ENCODE measurements at regions of chr19 and their contacts with region 1.

Region 1: GRCh38 chr19:13093407-13094105 is 9.1 kb downstream of the LYL1 start:
- DNase-seq: no peak
- ATAC-seq: peak; percentile 83
- H3K4me3 ChIP-seq: no peak overlapping the region
- H3K27ac ChIP-seq: peak overlapping the region; percentile 66
- H3K4me1 ChIP-seq: peaks cover 53% of the 10 kb centered on the region
- H3K27me3 ChIP-seq: no peaks in the 10 kb centered on the region
- CTCF ChIP-seq: peak; percentile 89

Region 2: DNA sequence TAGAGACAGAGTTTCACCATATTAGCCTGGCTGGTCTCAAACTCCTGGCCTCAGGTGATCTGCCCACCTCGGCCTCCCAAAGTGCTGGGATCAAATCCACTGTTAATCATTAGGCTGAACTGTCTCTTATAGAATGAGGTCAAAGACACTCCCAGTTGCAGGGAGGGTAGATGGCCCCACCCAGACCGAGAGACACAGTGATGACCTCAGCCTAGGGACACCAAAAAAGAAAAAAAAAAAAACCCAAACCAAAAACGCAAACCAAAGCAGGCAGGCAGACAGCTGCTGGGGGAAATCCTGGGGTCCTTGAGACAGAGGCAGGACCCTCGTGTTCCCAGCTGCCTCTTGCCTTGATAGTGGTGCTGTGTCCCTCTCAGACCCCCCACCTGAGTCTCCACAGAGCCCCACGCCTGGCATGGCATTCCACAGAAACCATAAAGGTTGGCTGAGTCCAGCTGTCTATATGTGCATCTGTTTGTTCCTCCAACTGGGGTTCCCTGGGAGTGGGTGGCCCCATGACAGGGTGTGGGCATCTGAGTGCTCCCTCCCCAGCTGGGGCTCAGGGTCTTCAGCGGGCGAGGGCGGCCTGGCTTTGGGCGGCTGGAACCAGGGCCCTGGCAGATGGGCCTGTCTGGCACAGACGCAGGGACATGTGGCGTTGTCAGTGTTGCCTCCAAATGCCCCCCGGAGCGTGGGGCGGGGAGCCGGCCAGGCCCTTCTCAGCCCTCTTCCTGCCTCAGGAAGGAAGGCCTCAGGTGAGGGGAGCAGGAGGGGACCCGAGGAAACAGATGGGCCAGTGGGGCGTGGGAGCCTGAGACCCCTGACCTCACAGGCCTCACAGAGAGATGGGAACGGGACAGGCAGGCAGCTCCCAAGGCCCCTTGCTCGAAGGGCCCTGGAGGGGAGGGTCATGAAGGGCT is 119.0 kb before region 1 on chr19:
- CTCF ChIA-PET with region 1: interaction called, 8 read pairs
- POLR2A ChIA-PET with region 1: interaction called, 4 read pairs
- in situ Hi-C with region 1: no loop called
- intact Hi-C with region 1: loop called (anchors 5 kb)
- DNase-seq: no peak
- ATAC-seq: no peak
- H3K4me3 ChIP-seq: no peak overlapping the region
- H3K27ac ChIP-seq: no peak overlapping the region
- H3K4me1 ChIP-seq: peaks cover 5% of the 10 kb centered on the region
- H3K27me3 ChIP-seq: no peaks in the 10 kb centered on the region
- CTCF ChIP-seq: no peak

Region 3: GRCh38 chr19:13033819-13034611 is 59.5 kb before region 1 on chr19:
- CTCF ChIA-PET with region 1: no interaction called
- POLR2A ChIA-PET with region 1: no interaction called
- in situ Hi-C with region 1: no loop called
- intact Hi-C with region 1: loop called (anchors 10 kb)
- DNase-seq: no peak
- ATAC-seq: peak; percentile 79
- H3K4me3 ChIP-seq: no peak overlapping the region
- H3K27ac ChIP-seq: peak overlapping the region; percentile 75
- H3K4me1 ChIP-seq: peaks cover 99% of the 10 kb centered on the region
- H3K27me3 ChIP-seq: no peaks in the 10 kb centered on the region
- CTCF ChIP-seq: peak; percentile 85

Region 4: DNA sequence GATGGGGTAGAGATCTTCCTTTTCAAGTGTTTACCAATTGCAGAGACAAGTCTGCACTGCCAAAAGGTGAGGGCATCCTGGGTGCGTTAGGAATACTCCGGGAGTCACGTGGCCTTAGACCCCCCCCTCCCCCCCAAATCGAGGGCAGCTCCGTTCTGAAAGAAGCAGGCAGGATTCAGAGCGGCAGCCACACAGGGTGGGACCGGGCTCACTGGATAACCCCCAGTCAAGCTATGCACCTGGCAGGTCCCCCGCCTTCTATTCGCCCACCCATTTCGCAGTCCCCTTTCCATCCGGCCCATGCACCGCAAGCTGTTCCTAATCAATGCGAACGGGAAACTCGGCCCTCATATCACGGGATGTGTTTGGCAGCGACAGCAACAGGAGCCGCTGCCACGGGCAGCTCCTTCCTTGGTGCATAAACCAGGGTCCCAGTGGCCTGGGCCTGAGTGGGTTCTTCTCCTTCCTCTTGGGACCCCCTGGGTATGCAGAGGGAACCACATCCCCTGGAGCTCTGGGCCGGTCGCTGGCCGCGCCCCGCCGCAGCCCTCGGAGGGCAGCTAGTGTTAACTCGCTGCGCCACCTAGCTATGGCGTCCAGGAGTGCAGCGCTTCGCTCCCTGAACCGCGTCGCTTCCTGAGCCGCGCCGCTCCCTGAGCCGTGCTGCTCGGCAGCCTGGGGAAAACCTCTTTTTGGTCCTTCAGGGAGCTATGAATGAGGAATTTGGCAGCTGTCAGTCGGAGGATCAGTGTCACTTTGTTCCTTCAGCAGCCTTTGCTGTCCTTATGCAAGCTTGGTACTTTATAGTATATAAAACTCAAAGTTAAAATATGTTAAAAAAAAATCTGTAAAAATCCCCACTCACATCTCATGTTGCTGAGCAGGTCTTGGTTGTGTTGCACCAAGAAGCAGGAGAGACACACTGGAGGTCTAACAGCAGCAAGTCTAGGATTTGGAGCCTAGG is 32.3 kb before region 1 on chr19:
- CTCF ChIA-PET with region 1: interaction called, 13 read pairs
- POLR2A ChIA-PET with region 1: interaction called, 4 read pairs
- in situ Hi-C with region 1: no loop called
- intact Hi-C with region 1: no loop called
- DNase-seq: peak; percentile 43
- ATAC-seq: peak; percentile 79
- H3K4me3 ChIP-seq: peak overlapping the region; percentile 13 to 50
- H3K27ac ChIP-seq: peak overlapping the region; percentile 99
- H3K4me1 ChIP-seq: peaks cover 74% of the 10 kb centered on the region
- H3K27me3 ChIP-seq: no peaks in the 10 kb centered on the region
- CTCF ChIP-seq: peak; percentile 90

Measured in Panc1 (cell line).